ENCODE measurements at regions of chr12 and their contacts with region 1.

Region 1: DNA sequence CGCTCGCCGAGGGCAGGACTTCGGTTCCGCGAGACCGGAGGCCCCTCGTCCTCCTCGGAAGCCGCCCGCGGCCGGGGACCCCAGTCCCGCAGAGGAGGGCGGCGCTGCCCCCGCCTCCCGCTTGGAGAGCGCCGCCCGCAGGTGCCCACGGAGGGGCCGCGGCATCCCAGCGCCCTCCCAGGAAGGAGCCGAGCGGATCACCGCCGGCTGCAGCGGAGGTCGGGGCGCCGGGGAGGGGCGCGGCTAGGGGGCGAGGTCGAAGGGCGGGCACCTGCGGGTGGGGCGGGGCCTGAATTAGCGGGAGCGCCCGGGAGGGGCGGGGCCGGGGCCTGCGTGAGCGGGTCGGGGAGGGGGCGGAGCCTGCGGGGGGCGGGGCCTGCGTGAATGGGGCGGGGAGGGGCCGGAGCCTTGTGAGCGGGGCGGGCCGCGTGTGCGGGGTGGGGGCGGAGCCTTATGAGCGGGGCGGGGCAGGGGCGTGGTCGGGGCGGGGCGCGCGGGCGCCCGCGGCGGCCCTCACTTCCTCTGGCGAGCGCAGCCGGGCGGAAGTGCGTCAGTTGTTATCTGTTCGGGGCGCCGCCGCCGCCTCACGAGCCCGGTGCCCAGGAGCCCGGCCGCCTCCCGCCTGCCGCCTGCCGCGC is at the start of gene FBRSL1:
- DNase-seq: peak; percentile 98
- ATAC-seq: peak; percentile 74
- H3K4me3 Mint-ChIP-seq: peak within 1 kb of the TSS; percentile 85
- H3K27ac Mint-ChIP-seq: peak within 1 kb of the TSS; percentile 85
- H3K4me1 Mint-ChIP-seq: peaks cover 61% of the 10 kb centered on the region
- H3K27me3 Mint-ChIP-seq: no peaks in the 10 kb centered on the region
- total RNA-seq, gene FBRSL1: 35.7 to 55.1 TPM

Region 2: DNA sequence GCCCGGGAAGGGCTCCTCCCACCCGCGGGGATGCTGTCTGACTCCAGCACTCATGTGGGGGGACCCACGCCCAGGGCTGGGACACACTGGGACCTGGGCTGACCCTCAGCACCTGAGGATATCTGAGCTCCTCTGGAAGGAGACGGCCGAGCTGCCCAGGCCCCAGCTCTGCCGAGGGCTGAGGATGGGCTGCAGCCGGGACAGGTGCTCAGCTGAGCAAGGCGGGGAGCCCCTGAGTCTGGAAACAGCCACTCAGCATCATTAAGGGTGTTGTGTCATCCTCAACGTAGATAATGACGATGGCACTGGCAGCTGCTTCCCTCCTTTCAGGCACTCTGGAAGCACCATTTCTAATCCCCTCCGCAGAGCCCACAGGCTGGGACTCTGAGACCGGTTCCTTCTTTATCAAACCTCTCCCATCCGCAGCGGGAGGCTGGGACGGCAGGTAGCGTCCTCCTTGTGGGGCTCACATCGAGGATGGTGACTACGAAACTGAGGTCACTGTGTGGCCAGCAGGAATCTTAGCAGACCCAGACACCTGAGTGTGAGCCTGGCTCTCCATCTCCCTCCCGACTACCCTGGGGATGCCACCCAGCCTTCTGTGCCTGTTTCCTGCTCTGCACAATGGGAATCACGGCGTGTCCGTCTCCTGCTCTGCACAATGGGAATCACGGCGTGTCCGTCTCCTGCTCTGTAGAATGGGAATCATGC is 805.6 kb before region 1 on chr12:
- CTCF ChIA-PET with region 1: no interaction called
- POLR2A ChIA-PET with region 1: no interaction called
- intact Hi-C with region 1: loop called in 1 of 2 experiments (anchors 10 kb)
- DNase-seq: peak; percentile 25
- ATAC-seq: no peak
- H3K4me3 Mint-ChIP-seq: no peak overlapping the region
- H3K27ac Mint-ChIP-seq: no peak overlapping the region
- H3K4me1 Mint-ChIP-seq: peaks cover 14% of the 10 kb centered on the region
- H3K27me3 Mint-ChIP-seq: peaks cover 5% of the 10 kb centered on the region

Region 3: GRCh38 chr12:131949431-131950181 is 540.1 kb before region 1 on chr12 and contains the start of gene EP400:
- CTCF ChIA-PET with region 1: no interaction called
- POLR2A ChIA-PET with region 1: no interaction called
- intact Hi-C with region 1: loop called in 1 of 2 experiments (anchors 1 kb)
- DNase-seq: peak; percentile 97
- ATAC-seq: peak; percentile 96
- H3K4me3 Mint-ChIP-seq: peak within 1 kb of the TSS; percentile 88
- H3K27ac Mint-ChIP-seq: peak within 1 kb of the TSS; percentile 93
- H3K4me1 Mint-ChIP-seq: peaks cover 42% of the 10 kb centered on the region
- H3K27me3 Mint-ChIP-seq: no peaks in the 10 kb centered on the region
- total RNA-seq, gene EP400: 46.4 to 51.3 TPM

Region 4: GRCh38 chr12:132189378-132190011 is 300.2 kb before region 1 on chr12:
- CTCF ChIA-PET with region 1: no interaction called
- POLR2A ChIA-PET with region 1: no interaction called
- intact Hi-C with region 1: loop called in 1 of 2 experiments (anchors 1 kb)
- DNase-seq: peak; percentile 97
- ATAC-seq: peak; percentile 95
- H3K4me3 Mint-ChIP-seq: peak overlapping the region; percentile 78
- H3K27ac Mint-ChIP-seq: peak overlapping the region; percentile 79
- H3K4me1 Mint-ChIP-seq: peaks cover 28% of the 10 kb centered on the region
- H3K27me3 Mint-ChIP-seq: no peaks in the 10 kb centered on the region

Region 5: GRCh38 chr12:132506328-132507160 is 16.8 kb after region 1 on chr12:
- CTCF ChIA-PET with region 1: no interaction called
- POLR2A ChIA-PET with region 1: no interaction called
- intact Hi-C with region 1: loop called (anchors 1 to 2 kb)
- DNase-seq: peak; percentile 89
- ATAC-seq: peak; percentile 99
- H3K4me3 Mint-ChIP-seq: peak overlapping the region; percentile 33
- H3K27ac Mint-ChIP-seq: peak overlapping the region; percentile 76
- H3K4me1 Mint-ChIP-seq: peaks cover 48% of the 10 kb centered on the region
- H3K27me3 Mint-ChIP-seq: no peaks in the 10 kb centered on the region

Region 6: DNA sequence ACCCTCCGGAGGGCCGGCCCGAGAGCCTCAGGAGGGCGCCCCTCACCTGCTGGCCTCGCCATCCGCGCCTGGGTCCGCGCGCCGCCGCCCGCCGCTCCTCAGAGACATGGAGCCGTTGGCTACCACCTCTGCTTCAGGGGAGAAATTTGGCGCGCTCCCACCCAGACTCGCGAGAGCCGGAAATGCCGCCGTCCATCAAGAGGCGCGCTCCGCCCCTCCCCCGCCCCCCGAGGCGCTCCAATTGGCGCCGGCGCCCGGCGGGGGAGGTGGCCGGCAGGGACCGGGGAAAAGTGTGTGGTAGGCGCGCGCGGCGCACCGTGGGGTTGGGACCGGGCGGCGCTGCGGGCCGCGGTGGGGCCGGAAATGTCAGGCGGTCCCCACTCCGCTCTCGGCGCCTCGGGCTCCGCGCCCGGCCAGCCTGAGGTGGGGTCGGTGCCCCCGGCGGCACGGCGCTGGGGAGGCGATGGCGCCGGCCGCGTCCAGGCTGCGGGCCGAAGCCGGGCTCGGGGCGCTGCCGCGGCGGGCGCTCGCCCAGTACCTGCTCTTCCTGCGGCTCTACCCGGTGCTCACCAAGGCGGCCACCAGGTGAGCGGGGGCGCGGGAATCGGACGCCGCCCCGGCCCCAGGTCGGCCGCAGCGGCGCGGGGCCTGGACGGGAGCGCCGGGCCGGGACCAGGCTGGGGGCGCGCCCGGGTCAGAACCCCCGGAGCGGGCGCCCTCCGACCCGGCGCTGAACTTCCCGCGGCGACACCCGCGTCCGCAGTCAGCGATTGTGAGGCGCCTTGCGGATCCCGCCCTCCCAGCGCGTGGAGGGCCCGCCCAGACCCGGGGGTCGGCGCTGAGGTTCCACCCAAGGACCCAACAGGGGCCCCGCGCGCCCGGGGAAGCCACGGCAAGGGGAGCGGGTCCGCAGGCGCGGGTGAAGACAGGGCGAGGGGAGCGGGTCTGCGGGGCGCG is 197.8 kb after region 1 on chr12 and contains the starts of genes POLE and PXMP2:
- CTCF ChIA-PET with region 1: no interaction called
- POLR2A ChIA-PET with region 1: no interaction called
- intact Hi-C with region 1: loop called in 1 of 2 experiments (anchors 5 kb)
- DNase-seq: peak; percentile 98
- ATAC-seq: peak; percentile 94
- H3K4me3 Mint-ChIP-seq: peak within 1 kb of the TSS; percentile 72
- H3K27ac Mint-ChIP-seq: peak within 1 kb of the TSS; percentile 55
- H3K4me1 Mint-ChIP-seq: peaks cover 19% of the 10 kb centered on the region
- H3K27me3 Mint-ChIP-seq: no peaks in the 10 kb centered on the region
- total RNA-seq, gene POLE: 121 to 124 TPM
- total RNA-seq, gene PXMP2: 12.2 to 14.3 TPM

Region 7: GRCh38 chr12:132828706-132829534 is 339.2 kb after region 1 on chr12 and contains the start of gene GOLGA3:
- CTCF ChIA-PET with region 1: no interaction called
- POLR2A ChIA-PET with region 1: no interaction called
- intact Hi-C with region 1: loop called in 1 of 2 experiments (anchors 2 kb)
- DNase-seq: peak; percentile 98
- ATAC-seq: peak; percentile 89
- H3K4me3 Mint-ChIP-seq: peak within 1 kb of the TSS; percentile 93
- H3K27ac Mint-ChIP-seq: peak within 1 kb of the TSS; percentile 100
- H3K4me1 Mint-ChIP-seq: peaks cover 44% of the 10 kb centered on the region
- H3K27me3 Mint-ChIP-seq: no peaks in the 10 kb centered on the region
- total RNA-seq, gene GOLGA3: 36.7 to 38.5 TPM

Measured in activated CD4-positive, alpha-beta T cell treated with anti-CD3 and anti-CD28 coated beads for 36 hours (primary cell).